Ascending aorta (tissue), 2 donors: ENCODE measurements at regions of chr4 and their contacts with region 1.

Region 1: GRCh38 chr4:156475322-156475721 is 496.3 kb downstream of the PDGFC start:
- DNase-seq: no peak
- H3K4me3 ChIP-seq: no peak overlapping the region
- H3K27ac ChIP-seq: peak overlapping the region; percentile 77 to 78
- H3K4me1 ChIP-seq: peaks cover 0 to 9% of the 10 kb centered on the region in 2 donors
- H3K27me3 ChIP-seq: no peaks in the 10 kb centered on the region
- CTCF ChIP-seq: peak; percentile 40 to 58 (median 56)

Region 2: DNA sequence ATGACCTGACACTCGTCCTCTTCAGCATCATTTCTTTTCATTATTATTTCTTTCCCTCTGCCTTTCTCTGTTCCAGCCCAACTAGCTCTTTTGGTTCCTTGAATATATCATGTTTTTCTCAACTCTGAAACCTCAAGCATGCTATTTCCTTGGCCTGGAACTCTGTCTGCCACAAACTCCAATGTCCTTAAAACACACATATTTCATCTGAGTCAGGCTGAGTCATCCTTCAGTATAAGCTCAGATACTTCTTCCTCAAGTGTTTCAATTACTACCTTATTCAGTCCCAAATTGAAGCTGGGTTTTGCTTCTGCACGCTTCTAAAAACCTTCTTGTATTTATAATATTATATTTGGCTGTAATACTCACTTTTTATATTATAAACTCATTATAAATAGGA is 72.1 kb after region 1 on chr4:
- intact Hi-C with region 1: loop called (anchors 5 kb)
- DNase-seq: no peak
- H3K4me3 ChIP-seq: no peak overlapping the region
- H3K27ac ChIP-seq: peak overlapping the region; percentile 81
- H3K4me1 ChIP-seq: peaks cover 13 to 40% of the 10 kb centered on the region in 2 donors
- H3K27me3 ChIP-seq: no peaks in the 10 kb centered on the region
- CTCF ChIP-seq: no peak

Region 3: GRCh38 chr4:156771171-156771837 is 296.0 kb after region 1 on chr4:
- intact Hi-C with region 1: loop called (anchors 5 kb)
- DNase-seq: peak in 1 of 2 donors; percentile 73
- H3K4me3 ChIP-seq: peak overlapping the region; percentile 24 to 43
- H3K27ac ChIP-seq: peak overlapping the region; percentile 73 to 80
- H3K4me1 ChIP-seq: peaks cover 6 to 50% of the 10 kb centered on the region in 2 donors
- H3K27me3 ChIP-seq: no peaks in the 10 kb centered on the region
- CTCF ChIP-seq: no peak

Region 4: GRCh38 chr4:156829201-156829873 is 354.0 kb after region 1 on chr4:
- intact Hi-C with region 1: loop called (anchors 10 kb)
- DNase-seq: peak in 1 of 2 donors; percentile 72
- H3K4me3 ChIP-seq: peak overlapping the region; percentile 41 to 43
- H3K27ac ChIP-seq: peak overlapping the region; percentile 65 to 73
- H3K4me1 ChIP-seq: peaks cover 0 to 13% of the 10 kb centered on the region in 2 donors
- H3K27me3 ChIP-seq: no peaks in the 10 kb centered on the region
- CTCF ChIP-seq: no peak

Region 5: DNA sequence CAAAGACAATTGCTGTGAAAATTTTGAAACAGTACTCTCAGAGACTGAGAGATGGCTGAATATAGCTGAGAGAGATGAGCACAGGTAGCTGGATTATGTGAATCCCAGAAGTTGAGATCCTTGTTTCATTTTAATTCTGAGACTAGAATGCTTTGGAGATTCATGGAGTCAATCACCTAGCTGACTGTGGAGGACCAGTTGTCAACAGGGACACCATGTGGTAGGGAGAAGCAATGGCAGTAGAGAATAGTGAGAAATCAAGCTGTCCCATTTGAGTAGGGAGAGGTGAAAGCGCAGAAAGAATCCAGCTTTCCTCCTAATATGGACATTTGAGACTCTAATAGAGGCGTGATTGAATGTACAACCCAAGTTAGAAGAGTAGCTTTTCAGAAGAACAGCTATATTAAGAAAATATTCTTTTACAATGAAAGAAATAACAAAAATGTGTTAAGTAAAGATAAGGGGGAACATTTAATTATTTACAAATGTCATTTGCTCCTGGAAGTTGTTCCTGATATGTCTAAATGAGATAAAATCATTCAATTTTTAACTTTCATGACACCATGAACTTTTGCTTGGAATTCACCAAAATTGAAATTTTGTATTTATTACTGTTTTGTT is 570.3 kb after region 1 on chr4:
- intact Hi-C with region 1: loop called (anchors 2 kb)
- DNase-seq: no peak
- H3K4me3 ChIP-seq: no peak overlapping the region
- H3K27ac ChIP-seq: no peak overlapping the region
- H3K4me1 ChIP-seq: peaks cover 0 to 3% of the 10 kb centered on the region in 2 donors
- H3K27me3 ChIP-seq: no peaks in the 10 kb centered on the region
- CTCF ChIP-seq: peak; percentile 67 to 79 (median 73)

Region 6: GRCh38 chr4:157128395-157128794 is 653.1 kb after region 1 on chr4:
- intact Hi-C with region 1: loop called (anchors 5 kb)
- DNase-seq: no peak
- H3K4me3 ChIP-seq: no peak overlapping the region
- H3K27ac ChIP-seq: no peak overlapping the region
- H3K4me1 ChIP-seq: no peaks in the 10 kb centered on the region
- H3K27me3 ChIP-seq: no peaks in the 10 kb centered on the region
- CTCF ChIP-seq: peak in 1 of 3 experiments; percentile 61

Region 7: GRCh38 chr4:157978680-157979361 is 1503.5 kb after region 1 on chr4:
- intact Hi-C with region 1: loop called (anchors 5 kb)
- DNase-seq: peak in 1 of 2 donors; percentile 72
- H3K4me3 ChIP-seq: peak overlapping the region; percentile 43 to 50
- H3K27ac ChIP-seq: no peak overlapping the region
- H3K4me1 ChIP-seq: peaks cover 0 to 3% of the 10 kb centered on the region in 2 donors
- H3K27me3 ChIP-seq: no peaks in the 10 kb centered on the region
- CTCF ChIP-seq: peak; percentile 77 to 86 (median 82)